Mammary epithelial cell (primary cell): ENCODE measurements at regions of chr20 and their contacts with region 1.

Region 1: GRCh38 chr20:39874049-39874888 is 814.8 kb downstream of the MAFB start:
- DNase-seq: peak; percentile 67
- H3K4me3 ChIP-seq: no peak overlapping the region
- H3K27ac ChIP-seq: no peak overlapping the region
- H3K4me1 ChIP-seq: peaks cover 13% of the 10 kb centered on the region
- H3K27me3 ChIP-seq: no peaks in the 10 kb centered on the region
- CTCF ChIP-seq: peak; percentile 93 to 97

Region 2: GRCh38 chr20:39103732-39104131 is 770.5 kb before region 1 on chr20:
- CTCF ChIA-PET with region 1: interaction called, 17 read pairs
- dilution Hi-C with region 1: no loop called
- in situ Hi-C with region 1: no loop called
- intact Hi-C with region 1: no loop called
- DNase-seq: no peak
- H3K4me3 ChIP-seq: no peak overlapping the region
- H3K27ac ChIP-seq: no peak overlapping the region
- H3K4me1 ChIP-seq: no peaks in the 10 kb centered on the region
- H3K27me3 ChIP-seq: no peaks in the 10 kb centered on the region
- CTCF ChIP-seq: no peak

Region 3: GRCh38 chr20:39264506-39265172 is 609.6 kb before region 1 on chr20:
- CTCF ChIA-PET with region 1: interaction called, 3 read pairs
- dilution Hi-C with region 1: no loop called
- in situ Hi-C with region 1: no loop called
- intact Hi-C with region 1: loop called (anchors 1 kb)
- DNase-seq: peak; percentile 83
- H3K4me3 ChIP-seq: no peak overlapping the region
- H3K27ac ChIP-seq: no peak overlapping the region
- H3K4me1 ChIP-seq: no peaks in the 10 kb centered on the region
- H3K27me3 ChIP-seq: no peaks in the 10 kb centered on the region
- CTCF ChIP-seq: peak; percentile 92 to 97

Region 4: DNA sequence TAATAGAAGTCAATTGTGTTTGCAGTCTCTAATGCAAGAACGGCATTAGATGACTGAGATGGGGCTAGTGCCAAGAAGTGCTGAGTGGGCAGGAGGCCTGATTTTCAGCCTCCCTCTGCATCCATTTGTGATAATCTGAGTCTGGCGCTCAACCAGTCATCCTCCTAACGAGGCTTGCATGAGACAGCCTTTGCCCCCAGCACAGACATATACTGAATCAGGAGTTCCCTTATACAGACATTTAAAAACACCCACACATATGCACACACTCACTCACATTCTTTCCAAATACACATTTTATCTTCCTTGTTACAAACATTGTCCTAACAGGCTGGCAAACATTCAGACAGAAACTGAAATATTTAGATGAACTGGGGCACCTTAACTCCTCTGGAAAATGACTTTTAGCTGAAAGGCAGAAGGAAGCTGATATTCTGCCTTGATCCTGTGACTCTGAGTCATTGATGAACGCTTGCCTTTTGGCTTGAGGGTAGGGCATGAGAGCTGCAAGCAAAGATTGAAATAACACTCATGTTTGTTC is 349.8 kb before region 1 on chr20:
- CTCF ChIA-PET with region 1: no interaction called
- dilution Hi-C with region 1: no loop called
- in situ Hi-C with region 1: no loop called
- intact Hi-C with region 1: loop called (anchors 10 kb)
- DNase-seq: peak; percentile 43
- H3K4me3 ChIP-seq: no peak overlapping the region
- H3K27ac ChIP-seq: no peak overlapping the region
- H3K4me1 ChIP-seq: no peaks in the 10 kb centered on the region
- H3K27me3 ChIP-seq: no peaks in the 10 kb centered on the region
- CTCF ChIP-seq: no peak

Region 5: GRCh38 chr20:39775110-39775509 is 99.2 kb before region 1 on chr20:
- CTCF ChIA-PET with region 1: no interaction called
- dilution Hi-C with region 1: no loop called
- in situ Hi-C with region 1: no loop called
- intact Hi-C with region 1: loop called (anchors 1 kb)
- DNase-seq: peak; percentile 41
- H3K4me3 ChIP-seq: no peak overlapping the region
- H3K27ac ChIP-seq: no peak overlapping the region
- H3K4me1 ChIP-seq: no peaks in the 10 kb centered on the region
- H3K27me3 ChIP-seq: no peaks in the 10 kb centered on the region
- CTCF ChIP-seq: no peak